Ascending aorta (tissue), 2 donors: ENCODE measurements at regions of chr4 and their contacts with region 1.

Region 1: DNA sequence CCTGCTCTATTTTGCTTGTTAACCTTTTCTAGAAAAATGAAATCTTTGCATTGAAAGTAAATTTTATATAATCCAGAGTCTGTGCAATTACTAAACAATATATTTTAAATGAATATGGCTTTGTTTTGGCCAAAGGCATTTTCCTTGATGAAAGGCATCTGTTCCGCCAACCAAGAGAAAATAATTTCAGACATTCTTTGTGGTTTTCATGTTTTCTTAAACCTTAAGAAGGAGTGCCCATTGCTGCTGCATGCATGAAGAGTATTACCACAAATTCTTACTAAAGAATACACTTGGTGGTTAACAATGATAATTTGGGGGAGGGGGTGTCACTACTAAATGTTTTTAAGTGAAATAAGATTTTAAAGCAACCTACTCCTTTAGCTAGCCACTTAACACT is 2.7 kb upstream of the PDGFC start:
- DNase-seq: no peak
- H3K4me3 ChIP-seq: no peak overlapping the region
- H3K27ac ChIP-seq: no peak overlapping the region
- H3K4me1 ChIP-seq: no peaks in the 10 kb centered on the region
- H3K27me3 ChIP-seq: no peaks in the 10 kb centered on the region
- CTCF ChIP-seq: no peak

Region 2: DNA sequence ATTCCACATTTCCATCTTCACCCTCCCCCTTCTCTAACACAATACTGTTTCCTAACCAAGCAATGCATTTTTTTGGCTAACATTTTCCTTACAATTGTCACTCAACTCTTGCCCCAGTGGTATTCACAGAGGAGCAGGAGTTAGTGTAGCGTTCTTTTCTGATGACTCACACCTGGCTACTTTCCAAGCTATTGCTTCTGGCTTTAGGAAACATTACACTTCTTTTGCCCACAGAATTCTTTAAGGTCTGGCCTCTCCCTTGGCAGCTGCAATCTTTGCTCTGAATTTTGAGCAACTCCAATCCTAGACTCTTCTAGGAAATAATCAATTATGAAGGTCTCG is 24.9 kb after region 1 on chr4:
- intact Hi-C with region 1: loop called (anchors 2 kb)
- DNase-seq: peak in 1 of 2 donors; percentile 78
- H3K4me3 ChIP-seq: no peak overlapping the region
- H3K27ac ChIP-seq: no peak overlapping the region
- H3K4me1 ChIP-seq: peaks cover 0 to 10% of the 10 kb centered on the region in 2 donors
- H3K27me3 ChIP-seq: no peaks in the 10 kb centered on the region
- CTCF ChIP-seq: no peak

Region 3: DNA sequence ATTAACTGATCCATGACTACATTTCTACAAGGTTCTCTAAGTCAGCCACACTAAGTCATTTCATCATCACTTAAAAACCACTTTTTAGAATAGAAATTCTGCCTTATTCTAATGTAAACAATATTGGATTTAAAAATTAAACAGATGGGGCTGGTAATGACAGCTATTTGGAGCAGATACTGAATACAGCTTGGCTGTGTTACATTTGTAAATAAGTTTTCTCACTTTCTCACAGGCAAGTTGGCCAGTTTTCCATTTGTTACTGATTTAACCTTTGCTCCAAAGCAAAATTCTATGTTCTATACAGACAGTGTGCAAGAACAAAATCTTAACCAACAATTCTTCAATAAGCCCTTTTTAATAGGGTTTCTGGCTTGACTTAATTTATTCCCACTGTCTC is 617.0 kb after region 1 on chr4:
- intact Hi-C with region 1: no loop called
- DNase-seq: no peak
- H3K4me3 ChIP-seq: no peak overlapping the region
- H3K27ac ChIP-seq: no peak overlapping the region
- H3K4me1 ChIP-seq: no peaks in the 10 kb centered on the region
- H3K27me3 ChIP-seq: no peaks in the 10 kb centered on the region
- CTCF ChIP-seq: no peak